Activated CD4-positive, alpha-beta T cell treated with anti-CD3 and anti-CD28 coated beads, Interleukin-2, amount 10 ng/mL, durations not matched to agents 24 days and 14 days (primary cell): ENCODE measurements at regions of chr17 and their contacts with region 1.

Region 1: GRCh38 chr17:48441231-48441711 is 11.3 kb upstream of the SKAP1 start:
- DNase-seq: peak; percentile 86
- H3K4me3 Mint-ChIP-seq: peak overlapping the region; percentile 51
- H3K27ac Mint-ChIP-seq: peak overlapping the region; percentile 95
- H3K4me1 Mint-ChIP-seq: peaks cover 83% of the 10 kb centered on the region
- H3K27me3 Mint-ChIP-seq: no peaks in the 10 kb centered on the region

Region 2: GRCh38 chr17:48429638-48430586 is 11.4 kb before region 1 on chr17 and contains the start of gene SKAP1:
- intact Hi-C with region 1: loop called (anchors 1 kb)
- DNase-seq: peak; percentile 93
- H3K4me3 Mint-ChIP-seq: peak within 1 kb of the TSS; percentile 99
- H3K27ac Mint-ChIP-seq: peak within 1 kb of the TSS; percentile 99
- H3K4me1 Mint-ChIP-seq: peaks cover 64% of the 10 kb centered on the region
- H3K27me3 Mint-ChIP-seq: no peaks in the 10 kb centered on the region
- total RNA-seq, gene SKAP1: 59.3 and 63.1 TPM in 2 replicates